ENCODE measurements at regions of chr15 and their contacts with region 1.

Region 1: GRCh38 chr15:98881526-98882520 is 125.8 kb downstream of the PGPEP1L start:
- DNase-seq: no peak
- H3K4me3 ChIP-seq: no peak overlapping the region
- H3K27ac ChIP-seq: peak overlapping the region; percentile 76 to 86
- H3K4me1 ChIP-seq: peaks cover 20 to 60% of the 10 kb centered on the region in 2 donors
- H3K27me3 ChIP-seq: no peaks in the 10 kb centered on the region
- CTCF ChIP-seq: peak; percentile 38 to 60 (median 38)

Region 2: DNA sequence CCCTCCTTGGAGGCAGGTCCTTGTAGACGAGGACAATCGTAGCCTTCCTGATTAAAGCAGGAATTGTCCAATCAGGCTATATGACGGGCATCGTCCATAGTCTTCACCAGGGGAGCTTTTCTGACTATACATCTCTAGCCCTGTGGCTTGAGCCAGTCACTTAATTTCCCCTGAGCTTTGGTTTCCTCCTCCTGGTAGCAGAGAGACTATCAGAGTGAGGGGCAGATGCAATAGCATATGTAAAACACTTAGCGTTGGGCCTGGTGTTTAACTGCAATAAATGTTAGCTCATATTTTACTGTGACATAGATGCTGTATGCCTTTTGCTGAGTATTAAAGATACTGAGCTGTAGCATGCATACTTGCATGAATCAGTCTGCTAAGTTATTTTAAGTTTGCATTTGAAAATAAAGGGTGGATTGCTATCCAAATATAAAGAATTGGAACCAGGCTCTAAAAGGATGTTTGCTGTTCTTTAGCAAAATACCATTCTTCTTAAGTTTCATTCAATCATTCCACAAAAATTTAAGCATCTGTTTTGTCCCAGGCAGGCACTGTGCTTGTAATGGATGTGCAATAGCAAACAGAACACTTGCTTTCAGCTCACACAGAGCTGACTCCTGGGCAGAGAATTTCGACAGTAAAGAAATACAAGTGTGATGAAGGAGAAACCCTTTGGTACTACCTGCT is 25.5 kb before region 1 on chr15:
- intact Hi-C with region 1: loop called (anchors 1 kb)
- DNase-seq: no peak
- H3K4me3 ChIP-seq: peak overlapping the region in 1 of 2 donors; percentile 6
- H3K27ac ChIP-seq: peak overlapping the region; percentile 92
- H3K4me1 ChIP-seq: peaks cover 45 to 80% of the 10 kb centered on the region in 2 donors
- H3K27me3 ChIP-seq: no peaks in the 10 kb centered on the region
- CTCF ChIP-seq: no peak

Region 3: DNA sequence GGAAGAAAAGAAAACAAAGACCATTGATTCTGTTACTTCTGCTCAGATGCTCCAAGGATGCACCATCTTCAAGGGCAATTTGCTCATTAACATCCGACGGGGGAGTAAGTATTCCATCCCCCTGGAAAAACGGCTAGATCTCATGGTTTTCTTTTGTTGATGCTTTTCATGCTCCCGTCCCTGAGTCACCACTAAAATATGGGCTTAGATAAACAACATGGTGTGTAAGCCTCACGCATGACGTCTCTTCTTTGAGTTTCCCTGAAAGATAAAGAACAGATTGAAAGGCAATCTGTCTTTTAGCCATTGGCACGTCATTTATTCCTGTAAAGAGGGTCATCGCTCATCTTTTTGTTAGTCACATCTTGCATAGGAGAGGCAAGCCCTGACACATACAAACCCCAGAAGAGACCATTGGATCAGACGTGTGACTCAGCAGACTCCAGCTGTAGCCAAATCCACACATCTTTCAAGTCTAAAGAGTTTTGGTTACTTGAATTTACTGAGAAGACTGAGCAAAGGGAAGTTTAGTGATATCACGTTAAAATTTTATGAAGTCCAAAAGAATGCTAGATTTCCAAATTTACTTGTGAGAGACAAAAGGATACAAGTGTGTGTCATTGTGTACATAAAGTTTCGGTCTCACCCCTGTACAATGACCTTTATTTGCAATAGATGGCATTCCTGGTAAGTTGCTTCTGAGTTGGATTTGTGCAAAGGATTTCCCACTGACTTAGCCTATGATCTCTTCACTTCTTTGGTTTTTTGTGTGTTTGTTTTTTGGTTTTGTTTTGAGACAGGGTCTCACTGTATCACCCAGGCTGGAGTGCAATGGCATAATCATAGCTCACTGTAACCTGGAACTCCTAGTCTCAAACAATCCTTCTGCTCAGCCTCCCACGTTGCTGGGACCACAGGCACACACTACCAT is 15.2 kb after region 1 on chr15:
- intact Hi-C with region 1: loop called (anchors 1 kb)
- DNase-seq: peak in 1 of 2 donors; percentile 85
- H3K4me3 ChIP-seq: no peak overlapping the region
- H3K27ac ChIP-seq: peak overlapping the region; percentile 64 to 74
- H3K4me1 ChIP-seq: peaks cover 0 to 29% of the 10 kb centered on the region in 2 donors
- H3K27me3 ChIP-seq: no peaks in the 10 kb centered on the region
- CTCF ChIP-seq: no peak